Gastrocnemius medialis (tissue), 4 donors: ENCODE measurements at regions of chr6 and their contacts with region 1.

Region 1: DNA sequence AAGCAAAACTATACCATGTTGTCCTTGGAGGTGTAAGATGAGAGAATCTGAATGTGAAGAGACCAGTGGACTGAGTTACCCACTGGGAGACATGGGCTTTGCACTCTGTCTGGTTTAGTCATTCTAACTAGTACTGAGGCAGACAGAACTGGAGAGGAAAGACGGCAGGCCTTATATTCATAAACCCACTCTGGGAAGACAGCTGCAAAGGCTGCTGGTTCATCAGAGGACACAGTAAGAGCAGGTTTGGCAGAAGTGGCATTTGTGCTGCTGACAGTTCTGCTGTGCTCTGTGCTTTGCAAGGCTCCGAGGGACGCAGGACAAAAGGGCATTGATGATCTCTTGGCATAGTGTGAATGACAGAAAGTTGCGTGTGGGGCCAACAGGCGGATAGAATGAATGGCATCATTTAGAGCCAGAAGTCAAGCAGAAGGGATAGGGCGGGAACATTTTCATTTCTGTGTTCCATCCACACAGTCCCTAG is 142.3 kb upstream of the TENT5A start:
- DNase-seq: no peak
- ATAC-seq: peak; percentile 33 to 38
- H3K4me3 ChIP-seq: no peak overlapping the region
- H3K27ac ChIP-seq: peak overlapping the region; percentile 21 to 41 (median 25)
- H3K4me1 ChIP-seq: no peaks in the 10 kb centered on the region
- H3K27me3 ChIP-seq: no peaks in the 10 kb centered on the region
- CTCF ChIP-seq: no peak
- POLR2A ChIP-seq: no peak

Region 2: GRCh38 chr6:81950877-81951276 is 56.0 kb after region 1 on chr6:
- in situ Hi-C with region 1: no loop called
- intact Hi-C with region 1: no loop called
- DNase-seq: no peak
- ATAC-seq: no peak
- H3K4me3 ChIP-seq: no peak overlapping the region
- H3K27ac ChIP-seq: no peak overlapping the region
- H3K4me1 ChIP-seq: no peaks in the 10 kb centered on the region
- H3K27me3 ChIP-seq: no peaks in the 10 kb centered on the region
- CTCF ChIP-seq: no peak
- POLR2A ChIP-seq: no peak

Region 3: DNA sequence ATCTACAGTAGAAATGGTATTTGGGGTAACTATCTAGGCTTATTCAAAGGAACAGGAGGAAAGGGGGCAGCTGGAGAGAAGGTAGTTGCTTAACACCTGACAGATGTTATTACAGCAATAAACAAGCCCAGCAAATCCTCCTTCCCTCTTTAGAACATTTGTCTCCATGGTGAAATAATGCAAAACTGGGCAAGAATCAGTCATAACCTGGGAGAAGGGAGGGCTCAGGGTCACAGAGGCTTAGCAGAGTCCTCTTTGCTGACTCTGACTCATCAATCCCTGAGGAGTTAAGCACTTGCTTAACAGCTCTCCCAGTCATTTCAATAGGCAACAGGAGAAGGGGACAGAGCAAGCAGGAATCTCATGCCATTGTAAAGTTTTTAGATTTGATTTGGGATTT is 122.5 kb after region 1 on chr6:
- in situ Hi-C with region 1: no loop called
- intact Hi-C with region 1: loop called (anchors 10 kb)
- DNase-seq: peak; percentile 49 to 69
- ATAC-seq: peak; percentile 82 to 84
- H3K4me3 ChIP-seq: no peak overlapping the region
- H3K27ac ChIP-seq: peak overlapping the region; percentile 53 to 69 (median 62)
- H3K4me1 ChIP-seq: peaks cover 2 to 16% of the 10 kb centered on the region in 2 donors
- H3K27me3 ChIP-seq: no peaks in the 10 kb centered on the region
- CTCF ChIP-seq: no peak
- POLR2A ChIP-seq: no peak